ENCODE measurements at regions of chr2 and their contacts with region 1.

Region 1: GRCh38 chr2:64914735-64915509 is 74.3 kb upstream of the SLC1A4 start:
- DNase-seq: no peak
- H3K4me3 ChIP-seq: no peak overlapping the region
- H3K27ac ChIP-seq: no peak overlapping the region
- H3K4me1 ChIP-seq: no peaks in the 10 kb centered on the region
- H3K27me3 ChIP-seq: no peaks in the 10 kb centered on the region
- CTCF ChIP-seq: no peak

Region 2: DNA sequence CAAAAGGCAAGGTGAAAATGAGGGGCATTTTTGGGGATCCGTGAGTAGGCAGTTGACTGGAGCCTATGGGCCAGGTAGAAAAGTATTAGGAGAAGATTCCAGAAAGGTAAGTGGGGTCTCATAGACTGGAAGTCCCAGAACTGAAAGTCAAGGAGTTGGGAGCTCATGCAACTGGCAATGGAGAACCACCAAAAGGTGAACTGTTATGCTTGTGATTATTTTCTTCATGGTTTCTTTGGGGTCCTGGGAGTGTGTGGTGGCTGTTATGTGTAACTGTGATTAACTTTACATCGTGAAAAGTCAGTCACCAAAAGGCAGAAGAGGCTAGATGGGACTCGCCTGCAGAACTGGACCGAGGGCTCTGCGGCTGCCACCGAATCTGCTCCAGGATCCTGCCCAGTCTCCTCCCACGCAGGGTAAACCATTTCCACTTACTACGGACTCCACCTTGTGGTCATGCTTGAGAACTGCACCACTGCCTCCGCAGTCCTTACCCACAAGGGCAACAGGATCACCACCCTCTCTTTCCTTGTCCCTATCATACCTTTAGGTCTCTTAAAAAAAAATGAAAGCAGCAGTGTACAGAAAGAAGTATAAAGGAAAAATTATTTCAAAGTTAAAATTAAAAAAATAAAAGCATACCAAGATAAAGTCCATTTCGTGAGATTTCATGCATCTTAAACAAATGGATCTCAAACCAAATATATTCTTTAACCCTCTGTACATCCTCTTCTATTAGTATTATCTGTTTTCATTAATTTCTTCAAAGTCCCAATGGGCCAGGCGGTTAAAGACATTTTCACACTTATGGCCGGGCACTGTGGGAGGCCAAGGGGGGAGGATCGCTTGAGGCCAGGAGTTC is 125.7 kb after region 1 on chr2:
- intact Hi-C with region 1: loop called (anchors 1 kb)
- DNase-seq: peak; percentile 56 to 93
- H3K4me3 ChIP-seq: peak overlapping the region; percentile 32 to 33
- H3K27ac ChIP-seq: no peak overlapping the region
- H3K4me1 ChIP-seq: no peaks in the 10 kb centered on the region
- H3K27me3 ChIP-seq: no peaks in the 10 kb centered on the region
- CTCF ChIP-seq: peak; percentile 91 to 97 (median 97)

Region 3: DNA sequence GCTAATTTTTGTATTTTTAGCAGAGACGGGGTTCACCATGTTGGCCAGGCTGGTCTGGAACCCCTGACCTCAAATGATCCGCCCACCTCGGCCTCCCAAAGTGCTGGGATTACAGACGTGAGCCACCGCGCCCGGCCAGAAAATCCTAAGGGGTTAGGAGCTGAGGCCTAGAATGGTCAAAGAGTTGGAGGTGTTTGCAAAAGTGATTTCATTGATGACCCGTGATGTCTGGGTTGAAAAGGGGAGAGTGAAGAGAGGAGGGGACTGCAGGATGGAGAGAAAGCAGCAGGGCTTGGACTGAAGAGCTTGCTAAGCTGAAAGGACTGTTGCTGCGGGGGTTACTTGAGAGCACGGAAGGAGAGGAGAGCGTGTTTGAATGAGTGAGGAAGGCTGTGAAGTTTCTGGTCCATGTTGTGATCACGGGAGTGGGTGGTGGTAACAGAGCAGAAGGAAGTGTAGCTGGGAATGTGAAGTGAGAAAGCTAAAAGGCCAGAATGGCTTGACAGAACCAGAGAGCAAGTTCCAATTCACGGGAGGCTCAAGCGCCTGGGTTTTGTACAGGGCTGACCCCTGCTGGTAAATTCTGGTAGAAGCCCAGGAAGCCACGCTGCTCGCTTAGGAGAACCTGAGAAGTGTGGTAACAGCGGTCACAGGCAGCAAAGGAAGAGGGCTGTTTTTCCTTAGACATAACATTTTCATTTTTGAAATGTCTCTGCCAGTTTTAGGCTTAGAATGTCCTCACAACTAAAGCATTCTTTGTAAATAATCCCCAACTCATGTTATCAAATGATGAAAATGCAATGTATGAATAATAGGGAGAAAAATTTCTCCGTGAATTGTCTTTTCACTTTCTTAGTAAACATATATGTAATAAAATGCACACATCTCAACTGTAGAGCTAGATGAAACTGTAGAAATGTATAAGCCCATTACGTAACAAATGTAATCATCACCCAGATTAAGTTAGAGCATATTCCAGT is 272.2 kb after region 1 on chr2:
- intact Hi-C with region 1: loop called (anchors 5 kb)
- DNase-seq: peak; percentile 38 to 87
- H3K4me3 ChIP-seq: no peak overlapping the region
- H3K27ac ChIP-seq: no peak overlapping the region
- H3K4me1 ChIP-seq: peaks cover 0 to 3% of the 10 kb centered on the region in 2 donors
- H3K27me3 ChIP-seq: no peaks in the 10 kb centered on the region
- CTCF ChIP-seq: peak; percentile 67 to 87 (median 80)